ENCODE measurements at regions of chr3 and their contacts with region 1.

Region 1: DNA sequence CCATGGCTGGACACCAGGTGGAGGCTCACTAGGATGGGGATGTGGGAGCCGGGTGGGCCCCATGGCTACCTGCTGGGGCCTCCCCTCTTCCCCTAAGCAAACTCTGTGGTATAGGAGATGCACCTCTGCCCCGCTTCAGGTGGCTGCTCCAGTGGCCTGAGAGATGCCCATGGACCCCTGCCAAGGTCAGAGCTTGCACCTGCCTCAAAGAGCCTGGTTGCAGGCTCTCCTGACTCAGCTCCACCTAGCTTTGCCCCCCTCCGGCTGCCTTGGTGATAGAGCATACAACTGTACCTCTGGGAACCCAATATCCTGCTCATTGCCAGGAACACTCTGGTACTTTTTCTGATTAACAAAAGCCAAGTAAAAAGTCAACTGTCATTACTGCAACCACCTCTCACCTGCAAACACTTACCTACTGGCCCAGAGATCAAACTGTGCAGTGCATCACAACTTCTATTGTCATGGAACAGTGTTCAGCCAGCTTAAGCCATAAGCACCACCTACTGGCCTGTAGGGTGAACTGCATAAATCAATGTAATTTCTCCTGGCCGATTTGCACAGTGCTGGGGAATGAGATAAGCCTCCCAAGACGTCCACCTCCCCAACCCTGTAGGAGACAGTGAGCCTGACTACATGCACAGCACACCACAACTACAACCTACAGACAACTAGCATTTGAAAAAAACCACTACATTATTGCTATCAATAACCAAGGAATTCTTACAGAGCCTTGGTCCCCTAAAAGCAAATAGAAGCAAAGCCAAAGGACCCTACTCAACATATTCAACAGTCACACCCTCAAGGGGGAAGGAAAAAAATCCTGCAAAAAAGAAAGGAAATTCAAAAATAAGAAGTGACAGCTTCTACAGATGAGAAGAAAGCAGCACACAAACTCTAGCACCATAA is 352.4 kb upstream of the ARHGEF26 start:
- DNase-seq: peak; percentile 52 to 65 (median 62)
- H3K4me3 ChIP-seq: no peak overlapping the region
- H3K4me3 Mint-ChIP-seq: no peak overlapping the region
- H3K27ac ChIP-seq: no peak overlapping the region
- H3K27ac Mint-ChIP-seq: no peak overlapping the region
- H3K4me1 ChIP-seq: no peaks in the 10 kb centered on the region
- H3K4me1 Mint-ChIP-seq: peaks cover 0 to 5% (median 3%) of the 10 kb centered on the region in 4 donors
- H3K27me3 ChIP-seq: no peaks in the 10 kb centered on the region
- H3K27me3 Mint-ChIP-seq: peaks cover 2 to 4% of the 10 kb centered on the region in 2 donors

Region 2: DNA sequence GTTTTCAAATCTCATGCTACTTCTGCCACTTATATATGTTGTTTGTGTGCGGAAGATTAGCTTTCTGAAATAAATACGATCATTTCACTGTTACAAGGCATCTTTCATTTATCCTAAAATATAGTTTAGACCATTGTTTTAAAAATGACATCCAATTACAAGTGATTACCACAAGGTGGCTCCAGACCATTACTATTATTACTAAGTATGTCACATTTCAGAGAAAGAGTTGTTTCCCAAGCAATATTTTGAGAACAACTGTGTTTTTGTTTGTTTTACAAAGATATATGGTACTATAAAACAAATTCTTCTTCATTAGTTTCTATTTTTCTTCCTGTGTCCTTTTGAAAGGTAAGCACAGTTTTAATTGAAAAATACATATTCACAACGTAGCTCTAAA is 742.8 kb before region 1 on chr3:
- CTCF ChIA-PET with region 1: interaction called, 7 read pairs
- POLR2A ChIA-PET with region 1: no interaction called
- intact Hi-C with region 1: loop called (anchors 1 kb)
- DNase-seq: peak in 4 of 5 donors; percentile 22 to 29 (median 26)
- H3K4me3 ChIP-seq: no peak overlapping the region
- H3K4me3 Mint-ChIP-seq: no peak overlapping the region
- H3K27ac ChIP-seq: no peak overlapping the region
- H3K27ac Mint-ChIP-seq: no peak overlapping the region
- H3K4me1 ChIP-seq: no peaks in the 10 kb centered on the region
- H3K4me1 Mint-ChIP-seq: no peaks in the 10 kb centered on the region
- H3K27me3 ChIP-seq: no peaks in the 10 kb centered on the region
- H3K27me3 Mint-ChIP-seq: peaks cover 2 to 11% of the 10 kb centered on the region in 2 donors

Region 3: GRCh38 chr3:153443961-153444360 is 324.9 kb before region 1 on chr3:
- CTCF ChIA-PET with region 1: interaction called, 5 read pairs
- POLR2A ChIA-PET with region 1: no interaction called
- intact Hi-C with region 1: loop called (anchors 1 kb)
- DNase-seq: no peak
- H3K4me3 ChIP-seq: no peak overlapping the region
- H3K4me3 Mint-ChIP-seq: no peak overlapping the region
- H3K27ac ChIP-seq: no peak overlapping the region
- H3K27ac Mint-ChIP-seq: no peak overlapping the region
- H3K4me1 ChIP-seq: peaks cover 10% of the 10 kb centered on the region
- H3K4me1 Mint-ChIP-seq: peaks cover 16 to 25% (median 20%) of the 10 kb centered on the region in 4 donors
- H3K27me3 ChIP-seq: no peaks in the 10 kb centered on the region
- H3K27me3 Mint-ChIP-seq: no peaks in the 10 kb centered on the region

Region 4: DNA sequence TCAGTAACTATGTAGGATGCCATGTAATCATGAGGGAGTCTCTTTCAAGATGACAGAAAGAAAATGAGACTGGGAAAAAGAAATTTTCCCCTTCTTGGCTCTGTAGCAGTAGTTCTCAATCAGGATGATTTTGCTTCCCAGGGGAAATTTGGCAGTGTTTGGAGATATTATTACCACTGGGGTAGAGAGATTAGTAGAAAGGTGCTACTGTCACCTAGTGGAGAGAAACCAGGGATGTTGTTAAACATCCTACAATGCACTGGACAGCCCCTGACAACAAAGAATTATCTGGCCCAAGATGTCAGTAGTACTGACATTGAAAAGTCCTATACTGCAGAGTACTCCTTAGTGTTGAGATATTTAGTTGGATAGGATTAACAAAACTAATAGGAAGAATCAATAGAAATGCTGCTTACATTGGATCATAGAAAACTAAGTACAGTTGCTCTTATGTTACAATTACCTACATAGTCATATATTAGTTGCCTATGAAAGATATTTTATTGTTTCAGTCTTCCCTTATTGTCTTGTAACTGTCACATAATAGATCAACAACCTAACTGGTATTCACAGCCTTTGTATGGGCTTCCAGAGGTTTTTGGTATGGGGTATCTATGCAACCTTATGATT is 173.5 kb before region 1 on chr3:
- CTCF ChIA-PET with region 1: interaction called, 4 read pairs
- POLR2A ChIA-PET with region 1: no interaction called
- intact Hi-C with region 1: loop called (anchors 2 kb)
- DNase-seq: peak in 4 of 5 donors; percentile 13 to 24 (median 16)
- H3K4me3 ChIP-seq: no peak overlapping the region
- H3K4me3 Mint-ChIP-seq: no peak overlapping the region
- H3K27ac ChIP-seq: no peak overlapping the region
- H3K27ac Mint-ChIP-seq: peak overlapping the region in 1 of 7 donors; percentile 34
- H3K4me1 ChIP-seq: no peaks in the 10 kb centered on the region
- H3K4me1 Mint-ChIP-seq: peaks cover 0 to 6% (median 5%) of the 10 kb centered on the region in 4 donors
- H3K27me3 ChIP-seq: no peaks in the 10 kb centered on the region
- H3K27me3 Mint-ChIP-seq: no peaks in the 10 kb centered on the region

Region 5: DNA sequence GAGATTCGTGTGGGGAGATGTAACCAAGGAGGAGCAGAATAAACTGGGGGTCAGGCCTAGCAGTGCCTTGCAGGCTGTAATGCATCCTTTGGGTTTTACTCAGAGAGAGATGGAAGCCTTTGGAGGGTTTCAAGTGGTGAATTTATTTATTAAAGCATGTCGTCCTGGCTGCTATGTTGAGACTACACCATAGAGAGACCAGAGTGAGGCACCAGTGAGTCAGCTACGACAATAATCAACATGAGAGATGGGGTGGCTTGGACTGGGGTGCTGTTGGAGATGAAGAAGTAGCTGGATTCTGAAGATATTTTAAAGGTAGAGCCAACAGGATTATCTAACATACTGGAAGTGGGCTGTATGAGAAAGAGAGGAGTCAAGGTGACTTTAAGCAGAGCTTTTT is 17.1 kb after region 1 on chr3:
- CTCF ChIA-PET with region 1: interaction called, 12 read pairs
- POLR2A ChIA-PET with region 1: no interaction called
- intact Hi-C with region 1: no loop called
- DNase-seq: no peak
- H3K4me3 ChIP-seq: no peak overlapping the region
- H3K4me3 Mint-ChIP-seq: no peak overlapping the region
- H3K27ac ChIP-seq: no peak overlapping the region
- H3K27ac Mint-ChIP-seq: no peak overlapping the region
- H3K4me1 ChIP-seq: no peaks in the 10 kb centered on the region
- H3K4me1 Mint-ChIP-seq: no peaks in the 10 kb centered on the region
- H3K27me3 ChIP-seq: no peaks in the 10 kb centered on the region
- H3K27me3 Mint-ChIP-seq: peaks cover 0 to 4% of the 10 kb centered on the region in 2 donors

Measured in CD4-positive, alpha-beta memory T cell (primary cell).